ENCODE measurements at regions of chr6 and their contacts with region 1.

Region 1: DNA sequence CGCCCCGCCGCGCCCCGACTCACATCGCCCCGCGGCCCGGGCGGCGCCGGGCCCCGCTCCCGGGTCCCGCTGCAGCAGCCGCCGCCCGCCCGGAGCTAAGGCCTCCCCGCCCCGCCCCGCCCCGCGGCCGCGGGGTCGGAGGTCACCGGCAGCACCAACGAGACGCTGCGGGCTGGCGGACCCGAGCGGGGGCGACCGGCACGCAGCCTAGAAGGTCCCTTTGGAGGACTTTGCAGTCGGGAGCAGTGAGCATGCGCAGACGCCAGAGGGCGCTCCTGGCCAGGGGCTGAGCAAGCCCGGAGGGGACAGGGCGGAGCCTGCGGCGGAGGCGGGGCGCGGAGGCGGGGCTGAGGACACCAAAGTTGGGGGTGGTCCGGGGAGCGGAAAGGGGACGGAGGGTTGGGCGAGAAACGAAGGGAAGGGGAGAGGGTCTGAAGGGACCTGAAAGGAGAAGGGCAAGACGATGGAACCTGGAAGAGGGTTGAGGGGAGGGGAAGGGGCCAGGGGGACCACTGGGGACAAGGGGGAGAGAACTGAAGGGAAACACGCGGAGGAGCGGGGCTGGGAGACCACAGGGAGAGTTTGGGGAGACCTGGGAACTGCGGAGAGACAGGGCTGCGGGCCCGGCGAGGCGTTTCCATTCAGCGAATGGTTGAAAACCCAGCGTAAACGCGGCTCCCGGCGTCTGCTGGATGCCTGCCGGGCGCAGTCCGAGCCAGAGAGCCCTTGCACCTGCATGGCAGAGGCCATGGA is at the start of gene FRS3:
- DNase-seq: peak; percentile 95 to 100 (median 99)
- H3K4me3 ChIP-seq: peak within 1 kb of the TSS; percentile 61 to 99 (median 84)
- H3K27ac ChIP-seq: peak within 1 kb of the TSS in 54 of 59 donors; percentile 32 to 94 (median 79)
- H3K27me3 ChIP-seq: no peaks in the 10 kb centered on the region
- CTCF ChIP-seq: peak; percentile 60 to 97 (median 88)
- total RNA-seq, gene FRS3: 20.4 to 52.8 (median 33.0) TPM

Region 2: DNA sequence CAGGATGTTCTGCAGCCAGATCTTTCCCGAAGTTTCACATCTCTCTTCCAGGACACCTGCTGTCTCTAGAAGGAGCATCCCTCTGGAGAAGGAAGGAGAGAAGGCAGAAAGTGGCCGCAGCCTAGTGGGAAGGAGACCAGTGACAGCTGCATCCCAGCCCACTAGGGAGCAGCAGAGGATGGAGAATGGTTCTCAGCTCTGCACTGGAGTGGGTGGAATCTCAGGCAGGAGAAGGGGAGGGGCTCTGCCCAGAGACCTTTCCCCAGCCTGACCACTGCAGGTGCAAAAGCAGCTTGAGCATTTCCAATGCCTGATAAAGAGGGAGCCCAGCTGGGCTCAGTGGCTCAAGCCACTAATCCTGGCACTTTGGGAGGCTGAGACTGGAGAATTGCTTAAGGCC is 412.3 kb before region 1 on chr6:
- intact Hi-C with region 1: loop called (anchors 2 to 5 kb)
- DNase-seq: peak; percentile 49 to 79 (median 74)
- H3K4me3 ChIP-seq: no peak overlapping the region
- H3K27ac ChIP-seq: no peak overlapping the region
- H3K27me3 ChIP-seq: peaks cover 0 to 61% (median 30%) of the 10 kb centered on the region in 45 donors
- CTCF ChIP-seq: peak; percentile 19 to 91 (median 80)

Region 3: DNA sequence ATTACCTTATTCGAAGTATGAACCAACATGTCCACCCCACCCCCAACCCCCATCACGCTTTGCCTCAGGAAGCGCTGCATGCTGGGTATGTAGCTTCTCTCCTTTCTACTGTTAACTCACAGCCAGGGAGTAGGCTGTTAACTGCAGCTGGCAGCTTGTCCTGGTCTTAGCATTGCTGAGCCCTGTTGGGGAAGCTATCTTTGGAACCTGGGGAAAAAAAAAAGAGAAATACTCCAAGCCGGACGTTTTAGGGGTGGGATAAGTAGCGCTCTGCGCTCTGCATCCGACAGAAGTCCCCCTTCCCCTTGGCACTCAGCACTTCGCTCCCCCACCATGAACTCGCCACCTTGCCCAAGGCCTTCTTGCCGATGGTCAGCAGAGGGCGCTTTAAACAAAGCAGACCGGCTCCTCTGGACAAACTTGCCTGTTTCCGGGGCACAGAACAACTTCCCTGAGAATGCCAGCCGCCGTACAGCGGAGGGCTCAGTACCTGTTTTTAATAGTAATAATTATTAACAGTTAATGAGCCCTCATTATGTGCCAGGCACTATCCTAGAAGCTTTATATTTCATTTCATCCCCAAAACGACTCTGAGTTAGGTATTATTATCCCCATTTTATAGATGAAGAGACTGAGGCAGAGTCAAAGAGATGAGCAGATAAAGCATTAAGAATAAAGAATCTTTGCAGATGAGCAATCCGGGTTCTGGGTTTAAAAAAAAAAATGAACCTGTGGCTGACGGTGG is 176.9 kb before region 1 on chr6:
- intact Hi-C with region 1: loop called (anchors 2 to 5 kb)
- DNase-seq: peak; percentile 58 to 85 (median 76)
- H3K4me3 ChIP-seq: peak overlapping the region in 43 of 59 donors; percentile 2 to 52 (median 29)
- H3K27ac ChIP-seq: peak overlapping the region in 13 of 59 donors; percentile 7 to 52 (median 39)
- H3K27me3 ChIP-seq: no peaks in the 10 kb centered on the region
- CTCF ChIP-seq: peak; percentile 70 to 98 (median 92)

Region 4: GRCh38 chr6:41659935-41660505 is 119.9 kb before region 1 on chr6:
- intact Hi-C with region 1: no loop called
- DNase-seq: no peak
- H3K4me3 ChIP-seq: no peak overlapping the region
- H3K27ac ChIP-seq: no peak overlapping the region
- H3K27me3 ChIP-seq: peaks cover 0 to 30% (median 3%) of the 10 kb centered on the region in 45 donors
- CTCF ChIP-seq: no peak

Region 5: GRCh38 chr6:41683510-41684310 is 96.3 kb before region 1 on chr6:
- intact Hi-C with region 1: loop called in 1 of 2 experiments (anchors 2 kb)
- DNase-seq: peak; percentile 70 to 88 (median 85)
- H3K4me3 ChIP-seq: peak overlapping the region in 58 of 59 donors; percentile 15 to 71 (median 54)
- H3K27ac ChIP-seq: peak overlapping the region; percentile 77 to 100 (median 95)
- H3K27me3 ChIP-seq: no peaks in the 10 kb centered on the region
- CTCF ChIP-seq: peak; percentile 83 to 98 (median 95)

Region 6: DNA sequence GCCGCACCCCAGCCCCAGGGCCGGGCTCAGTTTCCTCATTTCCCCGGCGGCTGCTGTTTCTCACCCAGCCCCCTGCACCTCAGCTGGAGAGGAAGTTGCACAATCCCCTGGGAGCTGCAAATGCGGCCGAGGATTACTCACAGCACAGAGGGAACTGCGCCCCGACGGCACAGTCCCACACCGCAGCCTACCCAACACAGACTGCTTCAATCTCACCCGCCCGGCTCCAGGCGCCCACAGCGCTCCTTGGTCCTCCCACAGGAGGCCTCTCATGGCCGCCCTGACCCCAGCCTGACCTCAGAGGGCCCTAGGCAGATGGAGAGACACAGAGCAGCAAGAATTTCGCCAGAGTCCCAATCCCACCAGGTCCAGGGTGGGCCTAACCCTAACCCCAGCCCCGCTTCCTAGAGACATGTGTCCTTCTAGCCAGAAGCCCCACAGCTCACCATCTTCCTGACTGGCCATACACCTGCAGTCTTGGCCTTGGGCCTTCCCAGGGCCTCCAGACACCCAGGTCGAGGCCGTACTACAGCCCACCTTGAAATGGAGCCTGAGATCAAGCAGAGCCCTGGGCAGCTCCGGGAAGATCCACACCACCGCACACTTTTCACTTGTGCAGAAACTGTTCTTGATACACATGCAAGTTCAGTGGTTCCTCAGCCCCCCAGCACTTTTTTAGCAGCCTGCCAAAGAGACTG is 56.3 kb before region 1 on chr6:
- intact Hi-C with region 1: no loop called
- DNase-seq: peak in 6 of 10 donors; percentile 60 to 77 (median 67)
- H3K4me3 ChIP-seq: peak overlapping the region in 24 of 59 donors; percentile 4 to 39 (median 20)
- H3K27ac ChIP-seq: peak overlapping the region; percentile 37 to 100 (median 82)
- H3K27me3 ChIP-seq: no peaks in the 10 kb centered on the region
- CTCF ChIP-seq: no peak

Region 7: DNA sequence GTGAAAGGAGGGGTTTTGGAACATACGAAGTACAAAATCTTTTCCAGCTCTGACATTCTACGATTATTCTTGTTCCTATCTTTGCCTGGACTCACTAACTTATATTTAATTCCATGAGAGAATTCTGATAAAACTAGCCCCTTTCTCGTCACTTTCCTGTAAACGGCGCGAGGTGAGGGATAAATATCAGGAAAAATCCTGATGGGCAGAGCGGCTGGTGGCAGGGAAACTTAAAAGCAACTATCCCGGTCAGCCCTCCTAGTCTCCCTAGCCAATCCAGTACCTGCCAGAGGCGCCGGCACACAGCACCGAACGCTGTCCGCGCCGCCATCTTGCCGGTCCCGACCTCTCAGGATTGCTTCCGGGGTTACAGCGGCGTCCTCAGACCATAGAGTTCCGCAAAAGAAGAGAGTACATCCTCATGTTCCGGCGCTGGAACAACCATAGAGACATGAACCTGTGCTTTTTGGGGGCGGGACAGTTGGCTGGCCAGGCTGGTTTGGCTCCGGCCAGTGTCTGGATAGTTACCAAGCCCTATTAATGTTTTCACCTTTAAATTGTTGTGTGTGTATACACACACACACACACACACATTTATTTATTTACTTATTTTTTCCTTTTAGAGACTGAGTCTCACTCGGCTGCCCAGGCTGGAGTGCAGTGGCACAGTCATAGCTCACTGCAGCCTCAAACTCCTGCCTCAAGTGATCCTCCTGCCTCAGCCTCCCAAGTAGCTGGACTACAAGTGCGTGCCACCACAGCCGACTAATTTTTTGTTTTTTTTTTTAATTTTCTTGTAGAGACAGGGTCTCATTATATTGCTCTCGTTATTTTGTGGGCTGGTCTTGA is 437.8 kb after region 1 on chr6 and contains the start of gene MRPS10:
- intact Hi-C with region 1: loop called in 1 of 2 experiments (anchors 5 kb)
- DNase-seq: peak; percentile 87 to 96 (median 92)
- H3K4me3 ChIP-seq: peak within 1 kb of the TSS; percentile 54 to 97 (median 80)
- H3K27ac ChIP-seq: peak within 1 kb of the TSS in 54 of 59 donors; percentile 2 to 88 (median 68)
- H3K27me3 ChIP-seq: no peaks in the 10 kb centered on the region
- CTCF ChIP-seq: peak in 52 of 56 donors; percentile 15 to 75 (median 49)
- total RNA-seq, gene MRPS10: 18.8 to 41.4 (median 29.6) TPM